Natural killer cell (primary cell): ENCODE measurements at regions of chr7 and their contacts with region 1.

Region 1: DNA sequence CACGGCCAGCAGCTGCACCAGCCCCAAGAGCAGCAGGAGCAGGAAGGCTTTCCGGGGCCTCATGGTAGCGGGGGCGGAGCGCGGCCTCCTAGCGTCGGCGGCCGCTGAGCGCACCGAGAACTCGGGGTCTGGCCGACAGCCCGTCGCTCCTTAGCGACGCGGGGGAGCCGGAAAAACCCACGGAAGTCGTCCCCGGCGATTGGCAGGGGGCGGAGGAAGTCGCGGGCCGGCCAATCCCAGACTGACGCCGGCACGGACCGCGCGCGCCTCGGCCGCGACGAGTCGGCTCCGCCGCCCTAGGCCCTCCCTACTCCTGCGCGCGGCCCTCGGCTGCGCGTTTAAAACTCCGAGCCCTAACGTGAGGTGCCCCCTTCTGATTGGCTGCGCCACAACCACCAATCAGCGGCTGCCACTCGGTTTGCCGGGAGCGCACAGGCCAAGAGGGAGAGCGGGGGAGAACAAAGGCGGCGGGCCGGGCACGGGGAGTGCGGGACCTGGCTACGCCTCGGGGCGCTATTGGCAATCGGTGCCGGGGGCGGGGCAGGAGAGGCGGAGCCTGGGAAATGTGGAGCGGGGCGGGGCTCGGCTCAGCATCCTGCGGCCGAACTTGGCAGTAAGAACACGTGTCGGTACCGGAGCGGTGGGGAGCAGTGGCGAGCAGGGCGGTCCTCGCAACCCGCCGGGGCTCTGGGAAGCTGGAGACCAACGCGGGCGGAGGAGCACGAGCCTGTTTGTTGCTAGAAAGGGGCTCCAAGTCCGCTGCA is at the start of gene PDIA4:
- DNase-seq: peak; percentile 96 to 98
- ATAC-seq: peak; percentile 82 to 94 (median 87)
- H3K4me3 ChIP-seq: peak within 1 kb of the TSS; percentile 64
- H3K4me3 Mint-ChIP-seq: peak within 1 kb of the TSS; percentile 93
- H3K27ac ChIP-seq: peak within 1 kb of the TSS; percentile 60
- H3K27ac Mint-ChIP-seq: peak within 1 kb of the TSS; percentile 89 to 94
- H3K4me1 ChIP-seq: peaks cover 18% of the 10 kb centered on the region
- H3K4me1 Mint-ChIP-seq: peaks cover 36 to 42% of the 10 kb centered on the region in 2 donors
- H3K27me3 ChIP-seq: no peaks in the 10 kb centered on the region
- H3K27me3 Mint-ChIP-seq: peaks cover 0 to 3% of the 10 kb centered on the region in 2 donors
- CTCF ChIP-seq: no peak
- total RNA-seq, gene PDIA4: 54.0 to 82.0 (median 62.7) TPM

Region 2: GRCh38 chr7:148884299-148885022 is 144.1 kb before region 1 on chr7:
- intact Hi-C with region 1: loop called (anchors 2 kb)
- DNase-seq: peak; percentile 95 to 96
- ATAC-seq: peak; percentile 85 to 96 (median 88)
- H3K4me3 ChIP-seq: peak overlapping the region; percentile 50
- H3K4me3 Mint-ChIP-seq: peak overlapping the region; percentile 93
- H3K27ac ChIP-seq: peak overlapping the region; percentile 83
- H3K27ac Mint-ChIP-seq: peak overlapping the region; percentile 96 to 97
- H3K4me1 ChIP-seq: peaks cover 8% of the 10 kb centered on the region
- H3K4me1 Mint-ChIP-seq: peaks cover 14 to 15% of the 10 kb centered on the region in 2 donors
- H3K27me3 ChIP-seq: no peaks in the 10 kb centered on the region
- H3K27me3 Mint-ChIP-seq: no peaks in the 10 kb centered on the region
- CTCF ChIP-seq: no peak

Region 3: GRCh38 chr7:148987010-148987750 is 41.3 kb before region 1 on chr7:
- intact Hi-C with region 1: loop called (anchors 2 kb)
- DNase-seq: peak; percentile 72 to 94
- ATAC-seq: peak; percentile 85 to 92 (median 87)
- H3K4me3 ChIP-seq: peak overlapping the region; percentile 68
- H3K4me3 Mint-ChIP-seq: peak overlapping the region; percentile 99
- H3K27ac ChIP-seq: peak overlapping the region; percentile 88
- H3K27ac Mint-ChIP-seq: peak overlapping the region; percentile 92 to 96
- H3K4me1 ChIP-seq: peaks cover 35% of the 10 kb centered on the region
- H3K4me1 Mint-ChIP-seq: peaks cover 45 to 55% of the 10 kb centered on the region in 2 donors
- H3K27me3 ChIP-seq: no peaks in the 10 kb centered on the region
- H3K27me3 Mint-ChIP-seq: no peaks in the 10 kb centered on the region
- CTCF ChIP-seq: no peak

Region 4: DNA sequence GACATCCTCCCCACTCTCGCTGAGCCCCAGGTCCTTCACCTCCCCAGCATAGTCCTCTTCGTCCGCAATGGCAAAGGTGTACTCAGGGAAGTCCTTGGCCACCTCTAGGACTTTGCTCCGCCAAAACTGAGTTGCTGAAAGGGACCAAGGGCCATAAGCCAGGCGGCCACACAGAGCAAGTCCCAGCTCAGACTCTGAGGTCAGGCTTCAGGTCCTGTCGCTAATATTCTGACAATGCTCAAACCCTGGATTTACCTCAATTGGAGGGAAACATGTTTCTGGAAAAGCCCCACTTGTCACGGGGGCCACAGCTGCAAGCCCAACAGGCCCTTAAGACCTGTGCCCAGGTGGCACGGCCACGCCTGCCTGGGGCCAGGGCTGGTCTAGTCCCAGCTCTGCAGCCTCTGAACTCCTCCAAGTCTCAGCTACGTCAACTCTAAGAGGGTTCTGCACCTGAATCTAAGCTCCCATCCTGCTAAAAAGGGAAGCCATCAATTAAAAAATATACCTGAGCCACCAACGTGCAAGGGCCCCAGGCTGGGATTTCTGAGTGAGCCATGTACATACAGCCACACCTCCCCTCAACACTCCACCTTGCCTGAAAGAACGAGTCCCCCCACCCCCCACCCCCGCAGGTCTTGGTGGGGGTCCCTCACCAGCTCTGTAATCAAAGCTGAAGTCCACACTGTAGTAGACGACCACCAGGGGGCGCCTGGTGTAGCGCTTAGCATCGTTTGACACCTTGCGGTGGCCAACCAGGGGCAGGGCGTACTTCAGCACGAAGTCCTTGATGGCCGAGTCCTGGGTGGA is 23.1 kb before region 1 on chr7:
- intact Hi-C with region 1: loop called (anchors 1 kb)
- DNase-seq: peak; percentile 80 to 92
- ATAC-seq: peak; percentile 84 to 99 (median 97)
- H3K4me3 ChIP-seq: no peak overlapping the region
- H3K4me3 Mint-ChIP-seq: no peak overlapping the region
- H3K27ac ChIP-seq: no peak overlapping the region
- H3K27ac Mint-ChIP-seq: peak overlapping the region in 1 of 2 donors; percentile 75
- H3K4me1 ChIP-seq: peaks cover 8% of the 10 kb centered on the region
- H3K4me1 Mint-ChIP-seq: peaks cover 4 to 6% of the 10 kb centered on the region in 2 donors
- H3K27me3 ChIP-seq: no peaks in the 10 kb centered on the region
- H3K27me3 Mint-ChIP-seq: no peaks in the 10 kb centered on the region
- CTCF ChIP-seq: peak; percentile 93

Region 5: GRCh38 chr7:149046416-149046815 is 17.9 kb after region 1 on chr7:
- intact Hi-C with region 1: no loop called
- DNase-seq: no peak
- ATAC-seq: no peak
- H3K4me3 ChIP-seq: no peak overlapping the region
- H3K4me3 Mint-ChIP-seq: no peak overlapping the region
- H3K27ac ChIP-seq: no peak overlapping the region
- H3K27ac Mint-ChIP-seq: no peak overlapping the region
- H3K4me1 ChIP-seq: no peaks in the 10 kb centered on the region
- H3K4me1 Mint-ChIP-seq: no peaks in the 10 kb centered on the region
- H3K27me3 ChIP-seq: no peaks in the 10 kb centered on the region
- H3K27me3 Mint-ChIP-seq: peaks cover 0 to 3% of the 10 kb centered on the region in 2 donors
- CTCF ChIP-seq: no peak

Region 6: DNA sequence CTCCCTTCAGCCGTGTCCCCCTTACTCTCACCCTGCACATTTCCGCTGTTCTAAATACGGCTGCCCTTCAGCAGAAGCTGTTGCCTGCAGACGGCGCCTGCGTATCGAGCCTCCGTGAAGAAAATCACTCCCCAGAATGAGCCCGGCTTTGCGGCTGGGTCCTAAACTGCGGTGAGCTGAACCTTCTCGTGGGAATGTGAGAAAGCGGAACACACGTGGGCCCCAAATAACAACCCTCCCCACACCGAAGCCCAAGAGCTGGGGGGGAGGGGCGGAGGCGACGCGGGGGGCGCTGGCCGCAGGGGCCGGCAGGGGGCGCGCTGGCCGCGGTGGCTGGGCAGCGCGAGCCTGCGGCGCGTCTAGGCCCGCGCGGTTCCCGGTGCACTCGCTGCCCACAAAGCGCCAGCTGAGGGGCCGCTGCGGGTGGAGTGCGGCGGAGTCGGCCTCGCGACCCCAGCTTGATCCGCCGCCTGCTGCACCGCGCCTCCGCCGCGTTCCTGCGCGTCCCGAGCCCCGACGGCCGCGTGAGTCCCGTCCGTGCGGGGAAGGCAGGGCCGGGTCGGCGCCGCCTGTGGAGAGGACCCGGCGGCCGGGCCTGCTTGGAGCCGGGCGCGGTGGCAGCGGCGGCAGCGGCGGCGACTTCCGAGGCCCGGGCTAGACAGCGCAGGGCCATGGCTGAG is 118.7 kb after region 1 on chr7 and contains the start of gene ZNF398:
- intact Hi-C with region 1: loop called (anchors 5 kb)
- DNase-seq: peak; percentile 83 to 93
- ATAC-seq: peak; percentile 81 to 94 (median 84)
- H3K4me3 ChIP-seq: peak within 1 kb of the TSS; percentile 70
- H3K4me3 Mint-ChIP-seq: peak within 1 kb of the TSS; percentile 86
- H3K27ac ChIP-seq: peak within 1 kb of the TSS; percentile 67
- H3K27ac Mint-ChIP-seq: peak within 1 kb of the TSS; percentile 84 to 89
- H3K4me1 ChIP-seq: peaks cover 26% of the 10 kb centered on the region
- H3K4me1 Mint-ChIP-seq: peaks cover 18 to 25% of the 10 kb centered on the region in 2 donors
- H3K27me3 ChIP-seq: no peaks in the 10 kb centered on the region
- H3K27me3 Mint-ChIP-seq: no peaks in the 10 kb centered on the region
- CTCF ChIP-seq: peak; percentile 69
- total RNA-seq, gene ZNF398: 14.8 to 18.5 (median 18.5) TPM

Region 7: DNA sequence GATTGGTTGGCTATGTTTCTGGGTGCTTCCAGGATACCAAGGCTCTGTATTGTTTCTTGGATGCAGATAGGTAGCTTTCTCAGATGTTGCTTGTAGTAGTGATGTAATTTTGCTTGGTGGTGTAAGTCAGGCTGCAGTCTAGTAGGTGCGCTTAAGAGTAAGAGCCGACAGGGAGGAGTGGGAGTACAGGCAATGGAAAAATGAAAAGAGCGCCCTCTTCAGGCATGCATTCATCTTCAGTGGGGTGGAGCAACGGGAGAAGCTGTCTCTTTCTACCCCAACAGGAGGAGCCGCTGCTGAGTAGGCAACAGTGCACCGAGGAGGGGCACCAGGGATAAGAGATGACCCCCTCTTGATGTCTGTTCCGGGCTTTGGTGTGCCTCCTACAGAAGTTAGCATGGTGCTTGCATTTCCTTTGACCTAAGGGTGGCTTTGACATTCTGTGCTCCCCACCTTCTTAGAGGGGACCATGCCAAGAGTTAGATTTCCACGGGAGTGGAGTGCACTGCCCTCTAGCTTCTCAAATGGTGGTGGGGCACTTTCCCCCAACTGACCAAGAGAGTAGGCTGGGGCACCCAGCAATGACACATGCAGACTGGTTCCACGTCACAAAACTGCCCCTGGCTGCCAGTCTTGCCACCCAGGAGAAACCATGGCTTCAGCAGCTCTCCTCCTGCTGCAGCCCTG is 289.6 kb after region 1 on chr7:
- intact Hi-C with region 1: no loop called
- DNase-seq: peak in 1 of 2 donors; percentile 15
- ATAC-seq: no peak
- H3K4me3 ChIP-seq: no peak overlapping the region
- H3K4me3 Mint-ChIP-seq: no peak overlapping the region
- H3K27ac ChIP-seq: no peak overlapping the region
- H3K27ac Mint-ChIP-seq: no peak overlapping the region
- H3K4me1 ChIP-seq: no peaks in the 10 kb centered on the region
- H3K4me1 Mint-ChIP-seq: peaks cover 9% of the 10 kb centered on the region in 2 donors
- H3K27me3 ChIP-seq: peaks cover 2% of the 10 kb centered on the region
- H3K27me3 Mint-ChIP-seq: peaks cover 33 to 50% of the 10 kb centered on the region in 2 donors
- CTCF ChIP-seq: no peak